CD4-positive, alpha-beta memory T cell (primary cell): ENCODE measurements at regions of chr11 and their contacts with region 1.

Region 1: GRCh38 chr11:122628810-122629555 is 26.5 kb upstream of the UBASH3B start:
- DNase-seq: peak; percentile 60 to 64 (median 62)
- H3K4me3 ChIP-seq: no peak overlapping the region
- H3K4me3 Mint-ChIP-seq: no peak overlapping the region
- H3K27ac ChIP-seq: no peak overlapping the region
- H3K27ac Mint-ChIP-seq: no peak overlapping the region
- H3K4me1 ChIP-seq: peaks cover 8% of the 10 kb centered on the region
- H3K4me1 Mint-ChIP-seq: peaks cover 0 to 10% (median 6%) of the 10 kb centered on the region in 4 donors
- H3K27me3 ChIP-seq: no peaks in the 10 kb centered on the region
- H3K27me3 Mint-ChIP-seq: peaks cover 0 to 1% of the 10 kb centered on the region in 2 donors

Region 2: GRCh38 chr11:122655527-122656072 is 26.6 kb after region 1 on chr11 and contains the start of gene UBASH3B:
- CTCF ChIA-PET with region 1: interaction called, 13 read pairs
- POLR2A ChIA-PET with region 1: interaction called, 6 read pairs
- intact Hi-C with region 1: no loop called
- DNase-seq: peak; percentile 63 to 68 (median 66)
- H3K4me3 ChIP-seq: peak within 1 kb of the TSS; percentile 55 to 86
- H3K4me3 Mint-ChIP-seq: peak within 1 kb of the TSS; percentile 97 to 98 (median 98)
- H3K27ac ChIP-seq: peak within 1 kb of the TSS; percentile 66
- H3K27ac Mint-ChIP-seq: peak within 1 kb of the TSS; percentile 88 to 98 (median 95)
- H3K4me1 ChIP-seq: peaks cover 44% of the 10 kb centered on the region
- H3K4me1 Mint-ChIP-seq: peaks cover 20 to 53% (median 40%) of the 10 kb centered on the region in 4 donors
- H3K27me3 ChIP-seq: no peaks in the 10 kb centered on the region
- H3K27me3 Mint-ChIP-seq: no peaks in the 10 kb centered on the region
- total RNA-seq, gene UBASH3B: 26.6 to 30.9 TPM

Region 3: GRCh38 chr11:122727101-122727929 is 98.3 kb after region 1 on chr11:
- CTCF ChIA-PET with region 1: interaction called, 11 read pairs
- POLR2A ChIA-PET with region 1: no interaction called
- intact Hi-C with region 1: no loop called
- DNase-seq: peak in 4 of 5 donors; percentile 38 to 50 (median 47)
- H3K4me3 ChIP-seq: peak overlapping the region; percentile 9 to 38
- H3K4me3 Mint-ChIP-seq: peak overlapping the region; percentile 79 to 93 (median 88)
- H3K27ac ChIP-seq: peak overlapping the region; percentile 59
- H3K27ac Mint-ChIP-seq: peak overlapping the region; percentile 92 to 99 (median 95)
- H3K4me1 ChIP-seq: peaks cover 67% of the 10 kb centered on the region
- H3K4me1 Mint-ChIP-seq: peaks cover 51 to 66% (median 59%) of the 10 kb centered on the region in 4 donors
- H3K27me3 ChIP-seq: no peaks in the 10 kb centered on the region
- H3K27me3 Mint-ChIP-seq: no peaks in the 10 kb centered on the region

Region 4: DNA sequence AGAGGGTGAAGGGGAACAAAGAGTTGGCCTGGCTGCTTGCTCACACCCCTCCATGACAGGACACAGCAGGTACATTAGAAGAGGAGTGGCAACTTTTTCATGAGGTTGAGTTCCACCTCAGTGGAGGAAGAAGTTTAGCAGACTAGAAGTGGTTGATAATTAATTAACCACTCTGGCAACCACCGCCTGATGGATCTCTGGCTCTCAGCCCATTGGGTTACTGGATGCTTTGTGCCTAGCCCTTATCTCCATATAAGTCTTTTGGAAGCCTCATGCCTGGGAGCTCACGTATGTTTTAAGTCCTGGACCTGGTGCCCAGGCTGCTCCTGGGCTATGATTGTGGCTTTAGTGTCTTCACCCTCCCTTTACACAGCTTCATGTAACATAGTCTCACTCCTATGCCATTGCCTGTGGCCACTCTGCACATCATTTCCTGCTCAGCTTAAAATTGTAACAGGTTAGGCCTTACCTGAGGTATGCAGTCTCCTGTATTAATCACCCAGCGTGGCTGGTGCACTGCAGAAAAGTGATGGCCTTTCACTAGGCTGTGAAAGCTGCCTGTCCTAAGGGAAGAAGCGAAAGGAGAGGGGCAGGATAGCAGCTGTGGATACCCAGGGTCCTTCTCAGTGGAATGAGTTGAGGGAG is 136.6 kb after region 1 on chr11:
- CTCF ChIA-PET with region 1: interaction called, 472 read pairs
- POLR2A ChIA-PET with region 1: no interaction called
- intact Hi-C with region 1: no loop called
- DNase-seq: no peak
- H3K4me3 ChIP-seq: no peak overlapping the region
- H3K4me3 Mint-ChIP-seq: no peak overlapping the region
- H3K27ac ChIP-seq: no peak overlapping the region
- H3K27ac Mint-ChIP-seq: no peak overlapping the region
- H3K4me1 ChIP-seq: peaks cover 5% of the 10 kb centered on the region
- H3K4me1 Mint-ChIP-seq: peaks cover 0 to 25% (median 9%) of the 10 kb centered on the region in 4 donors
- H3K27me3 ChIP-seq: no peaks in the 10 kb centered on the region
- H3K27me3 Mint-ChIP-seq: no peaks in the 10 kb centered on the region

Region 5: GRCh38 chr11:122781378-122782195 is 152.6 kb after region 1 on chr11:
- CTCF ChIA-PET with region 1: interaction called, 136 read pairs
- POLR2A ChIA-PET with region 1: interaction called, 7 read pairs
- intact Hi-C with region 1: loop called (anchors 1 kb)
- DNase-seq: peak; percentile 62 to 71 (median 67)
- H3K4me3 ChIP-seq: no peak overlapping the region
- H3K4me3 Mint-ChIP-seq: no peak overlapping the region
- H3K27ac ChIP-seq: no peak overlapping the region
- H3K27ac Mint-ChIP-seq: no peak overlapping the region
- H3K4me1 ChIP-seq: no peaks in the 10 kb centered on the region
- H3K4me1 Mint-ChIP-seq: peaks cover 0 to 8% (median 1%) of the 10 kb centered on the region in 4 donors
- H3K27me3 ChIP-seq: no peaks in the 10 kb centered on the region
- H3K27me3 Mint-ChIP-seq: no peaks in the 10 kb centered on the region

Region 6: DNA sequence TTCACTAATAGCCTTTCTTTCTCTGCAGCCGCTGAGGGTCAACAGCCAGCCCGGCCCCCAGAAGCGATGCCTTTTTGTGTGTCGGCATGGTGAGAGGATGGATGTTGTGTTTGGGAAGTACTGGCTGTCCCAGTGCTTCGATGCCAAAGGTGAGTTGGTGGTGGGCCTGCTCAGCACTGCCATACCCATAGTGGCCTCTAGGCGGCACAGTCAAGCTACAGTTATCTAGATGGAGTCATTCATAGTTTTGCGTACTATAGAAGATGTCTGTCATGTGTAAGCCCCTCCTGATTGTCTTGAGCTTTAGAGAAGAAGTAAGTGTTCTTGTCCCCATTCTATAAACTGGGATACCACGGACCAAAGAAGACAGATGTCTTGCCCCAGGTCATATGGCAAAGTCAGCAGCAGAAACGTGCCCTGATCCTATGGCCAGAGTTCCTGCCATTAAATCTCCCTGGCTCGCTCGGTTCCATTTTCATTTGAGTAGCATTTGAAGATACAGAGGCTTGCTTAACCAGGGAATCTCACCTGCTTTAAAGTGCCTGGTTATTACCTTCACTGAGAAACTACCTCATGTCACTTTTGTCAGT is 167.2 kb after region 1 on chr11:
- CTCF ChIA-PET with region 1: interaction called, 18 read pairs
- POLR2A ChIA-PET with region 1: no interaction called
- intact Hi-C with region 1: no loop called
- DNase-seq: peak; percentile 33 to 59 (median 44)
- H3K4me3 ChIP-seq: no peak overlapping the region
- H3K4me3 Mint-ChIP-seq: no peak overlapping the region
- H3K27ac ChIP-seq: no peak overlapping the region
- H3K27ac Mint-ChIP-seq: peak overlapping the region in 2 of 7 donors; percentile 47 to 76
- H3K4me1 ChIP-seq: no peaks in the 10 kb centered on the region
- H3K4me1 Mint-ChIP-seq: peaks cover 0 to 2% (median 0%) of the 10 kb centered on the region in 4 donors
- H3K27me3 ChIP-seq: no peaks in the 10 kb centered on the region
- H3K27me3 Mint-ChIP-seq: no peaks in the 10 kb centered on the region